ENCODE measurements at regions of chr1 and their contacts with region 1.

Region 1: GRCh38 chr1:24847995-24848881 is 81.8 kb downstream of the RUNX3 start:
- DNase-seq: peak; percentile 82
- H3K4me3 ChIP-seq: peak overlapping the region; percentile 53
- H3K27ac ChIP-seq: no peak overlapping the region
- H3K27me3 ChIP-seq: no peaks in the 10 kb centered on the region
- CTCF ChIP-seq: peak; percentile 96

Region 2: DNA sequence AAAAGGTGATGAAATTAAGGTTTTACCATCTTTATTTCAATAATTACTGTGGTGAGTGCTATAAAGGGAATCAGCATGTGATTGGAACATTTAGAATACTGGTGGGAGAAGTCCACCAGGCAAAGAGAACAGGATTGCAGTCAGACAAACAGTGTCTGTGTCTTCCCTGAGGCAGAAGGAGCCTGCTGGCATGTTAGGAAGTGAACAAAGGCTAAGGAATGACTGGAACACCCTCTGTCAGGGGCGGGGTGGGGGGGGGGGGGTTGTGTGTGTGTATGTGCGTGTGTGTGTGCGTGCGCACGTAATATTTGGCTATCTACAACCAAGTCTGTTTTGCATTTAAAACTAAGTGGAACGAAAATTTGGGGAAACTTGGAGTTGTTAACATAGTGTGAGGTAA is 174.9 kb before region 1 on chr1:
- in situ Hi-C with region 1: loop called (anchors 25 kb)
- DNase-seq: peak; percentile 40
- H3K4me3 ChIP-seq: no peak overlapping the region
- H3K27ac ChIP-seq: peak overlapping the region; percentile 69
- H3K27me3 ChIP-seq: no peaks in the 10 kb centered on the region
- CTCF ChIP-seq: no peak

Region 3: GRCh38 chr1:24779689-24780464 is 68.4 kb before region 1 on chr1:
- in situ Hi-C with region 1: no loop called
- DNase-seq: no peak
- H3K4me3 ChIP-seq: no peak overlapping the region
- H3K27ac ChIP-seq: no peak overlapping the region
- H3K27me3 ChIP-seq: no peaks in the 10 kb centered on the region
- CTCF ChIP-seq: peak; percentile 14

Region 4: GRCh38 chr1:24803220-24803619 is 45.0 kb before region 1 on chr1:
- in situ Hi-C with region 1: no loop called
- DNase-seq: no peak
- H3K4me3 ChIP-seq: no peak overlapping the region
- H3K27ac ChIP-seq: no peak overlapping the region
- H3K27me3 ChIP-seq: no peaks in the 10 kb centered on the region
- CTCF ChIP-seq: no peak

Measured in brain microvascular endothelial cell (primary cell).